Calu3 (cell line): ENCODE measurements at regions of chr20 and their contacts with region 1.

Region 1: DNA sequence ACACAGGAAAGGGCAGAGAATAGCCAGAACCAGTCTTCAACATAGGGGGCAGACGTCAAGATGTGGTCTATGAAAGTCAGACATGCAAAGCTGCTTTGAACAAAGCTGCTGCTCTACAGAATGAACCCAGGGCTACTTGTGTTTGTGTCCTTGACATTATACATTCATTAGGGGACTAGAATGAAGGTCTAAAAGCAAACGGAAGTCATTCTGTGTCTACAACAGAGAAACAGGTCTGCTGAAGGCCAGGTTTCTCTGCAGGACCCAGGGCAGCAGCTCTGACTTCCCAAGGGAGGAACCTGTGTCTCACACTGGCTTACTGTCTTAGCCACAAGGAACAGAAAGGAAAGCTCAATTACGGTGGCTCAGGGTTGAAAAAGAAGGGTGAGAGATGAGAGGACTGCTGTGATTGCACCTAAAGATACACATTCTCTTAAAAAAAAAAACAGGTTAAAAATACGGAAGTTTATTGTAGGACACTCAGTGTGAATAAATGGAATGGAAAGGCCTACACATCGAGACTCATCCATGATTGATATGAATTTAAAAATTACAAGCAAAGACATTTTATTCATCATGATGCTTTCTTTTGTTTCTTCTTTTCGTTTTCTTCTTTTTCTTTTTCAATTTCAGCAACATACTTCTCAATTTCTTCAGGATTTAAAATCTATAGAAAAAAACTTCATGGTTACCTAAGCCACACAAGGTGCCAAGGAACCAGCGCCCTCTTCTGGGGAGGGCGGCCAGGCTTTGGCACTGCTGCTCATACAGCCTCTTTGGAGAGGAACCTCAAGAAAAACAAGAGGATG is 6.7 kb downstream of the PSMA7 start:
- DNase-seq: peak; percentile 83
- H3K4me3 Mint-ChIP-seq: no peak overlapping the region
- H3K27ac Mint-ChIP-seq: peak overlapping the region; percentile 37
- H3K4me1 Mint-ChIP-seq: peaks cover 27% of the 10 kb centered on the region
- H3K27me3 Mint-ChIP-seq: no peaks in the 10 kb centered on the region
- CTCF ChIP-seq: peak; percentile 82

Region 2: DNA sequence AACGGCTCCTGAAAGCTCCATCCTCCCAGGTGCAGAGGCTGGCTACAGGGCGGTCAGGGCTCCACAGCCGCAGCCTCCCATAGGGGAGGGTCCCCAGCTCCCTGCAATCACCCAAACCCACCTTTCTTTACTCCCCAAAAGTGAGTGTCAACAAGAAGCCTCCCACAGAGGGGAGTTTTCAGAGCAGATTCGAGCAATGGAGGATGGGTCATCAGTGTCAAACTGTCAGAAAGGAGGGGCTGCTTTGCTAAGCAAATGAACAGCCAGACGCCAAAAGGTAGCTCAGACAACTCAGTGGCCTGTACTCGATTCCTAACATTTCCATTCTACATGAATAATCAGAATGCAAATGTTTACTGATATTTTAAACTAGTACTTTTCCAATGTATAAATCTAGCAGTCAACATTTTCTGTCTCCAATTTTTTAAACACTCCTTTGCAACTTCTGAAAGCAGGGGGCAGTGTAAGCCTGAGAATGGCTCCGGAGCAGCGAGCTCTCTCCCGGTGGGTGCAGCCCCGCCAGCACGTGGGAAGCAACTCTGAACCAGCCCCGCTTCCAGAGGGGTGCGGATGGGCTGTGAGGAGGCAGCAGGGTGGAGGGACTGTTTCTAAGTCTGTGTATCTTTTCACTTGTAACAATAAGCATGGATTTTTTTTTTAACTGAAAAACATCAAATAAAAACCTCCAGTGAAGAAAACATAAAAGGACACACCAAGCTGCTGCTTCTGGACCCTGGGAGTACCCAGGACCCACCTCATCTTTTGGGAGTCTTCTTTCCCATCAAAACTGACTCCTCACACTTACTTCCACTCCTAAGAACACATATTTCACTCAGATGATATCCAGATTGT is 125.7 kb before region 1 on chr20:
- CTCF ChIA-PET with region 1: interaction called, 6 read pairs
- intact Hi-C with region 1: loop called (anchors 2 kb)
- DNase-seq: peak; percentile 76
- H3K4me3 Mint-ChIP-seq: no peak overlapping the region
- H3K27ac Mint-ChIP-seq: no peak overlapping the region
- H3K4me1 Mint-ChIP-seq: peaks cover 19% of the 10 kb centered on the region
- H3K27me3 Mint-ChIP-seq: no peaks in the 10 kb centered on the region
- CTCF ChIP-seq: peak; percentile 76

Region 3: DNA sequence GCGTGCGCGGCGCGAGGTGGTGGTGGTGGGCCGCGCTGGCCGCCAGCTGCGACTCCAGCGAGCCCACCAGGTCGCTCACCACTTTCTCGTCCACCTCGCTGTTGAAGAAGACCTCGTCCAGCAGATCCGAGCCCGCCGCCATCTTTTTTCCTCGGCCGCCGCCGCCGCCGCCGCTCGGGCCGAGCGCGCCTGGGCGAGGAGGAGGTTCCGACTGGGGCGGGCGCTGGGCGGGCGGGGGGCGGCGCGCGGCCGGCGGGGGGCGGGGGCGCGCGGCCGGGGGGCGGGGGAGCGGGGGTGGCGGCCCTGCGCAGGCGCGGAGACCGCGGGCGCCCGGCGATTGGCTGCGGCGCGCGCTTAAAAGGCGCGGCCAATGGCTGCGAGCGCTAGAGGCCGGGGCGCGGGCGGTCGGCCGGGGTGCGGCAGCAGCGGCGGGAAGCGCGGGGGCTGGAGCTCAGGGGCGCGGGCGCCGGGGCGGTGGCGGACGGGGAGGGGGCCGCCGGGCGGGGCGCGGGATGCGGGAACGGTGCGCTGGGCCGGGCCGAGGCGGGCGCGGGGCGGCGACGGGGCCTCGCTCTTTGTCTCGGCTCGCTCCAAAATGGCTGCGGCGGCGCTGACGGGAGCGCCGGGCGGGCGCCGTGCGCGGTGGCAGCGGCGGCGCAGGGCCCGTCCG is 70.7 kb before region 1 on chr20 and contains the start of gene TAF4:
- CTCF ChIA-PET with region 1: no interaction called
- intact Hi-C with region 1: loop called (anchors 5 kb)
- DNase-seq: peak; percentile 82
- H3K4me3 Mint-ChIP-seq: peak within 1 kb of the TSS; percentile 77
- H3K27ac Mint-ChIP-seq: peak within 1 kb of the TSS; percentile 99
- H3K4me1 Mint-ChIP-seq: peaks cover 54% of the 10 kb centered on the region
- H3K27me3 Mint-ChIP-seq: peaks cover 12% of the 10 kb centered on the region
- CTCF ChIP-seq: no peak
- total RNA-seq, gene TAF4: 64.3 and 65.2 TPM in 2 replicates

Region 4: DNA sequence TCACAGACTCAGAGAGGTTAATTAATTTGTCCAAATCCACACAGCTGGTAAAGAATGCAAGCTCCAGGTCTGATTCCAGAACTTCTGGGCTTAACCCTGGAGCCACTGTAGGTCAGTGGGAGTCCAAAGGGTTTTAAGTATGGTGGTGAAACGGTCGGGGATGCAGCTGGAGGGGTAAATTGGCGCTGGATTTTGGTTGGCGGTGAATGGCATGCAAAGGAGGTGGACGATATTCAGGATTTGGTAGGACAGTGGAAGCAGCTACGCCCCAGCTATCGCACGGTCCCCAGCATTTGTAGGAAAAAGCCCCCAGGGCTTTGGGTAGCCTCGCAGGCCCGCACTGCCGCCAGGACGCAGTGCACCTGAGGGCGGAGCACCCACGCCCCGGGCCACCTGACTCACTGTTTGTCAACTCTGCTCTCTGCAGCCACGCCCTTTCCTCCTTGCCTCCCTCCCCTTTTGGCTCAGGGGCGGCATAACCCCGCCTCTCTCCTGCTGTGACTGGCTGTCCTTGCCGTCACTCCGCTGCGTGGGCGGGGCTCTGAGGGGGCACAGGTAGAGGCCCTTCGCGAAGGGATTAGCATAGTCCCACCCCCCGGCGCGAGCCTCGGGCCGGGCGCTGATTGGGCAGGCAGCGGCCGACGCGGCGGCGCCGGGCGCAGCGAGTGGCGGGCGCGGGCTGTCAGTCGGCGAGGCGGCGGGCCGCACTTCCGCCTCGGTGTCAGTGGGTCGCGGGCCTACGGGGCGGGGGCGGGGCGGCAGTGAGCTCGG is 101.5 kb after region 1 on chr20 and contains the start of gene OSBPL2:
- CTCF ChIA-PET with region 1: no interaction called
- intact Hi-C with region 1: no loop called
- DNase-seq: peak; percentile 100
- H3K4me3 Mint-ChIP-seq: peak within 1 kb of the TSS; percentile 88
- H3K27ac Mint-ChIP-seq: peak within 1 kb of the TSS; percentile 94
- H3K4me1 Mint-ChIP-seq: peaks cover 55% of the 10 kb centered on the region
- H3K27me3 Mint-ChIP-seq: peaks cover 13% of the 10 kb centered on the region
- CTCF ChIP-seq: no peak
- total RNA-seq, gene OSBPL2: 115 and 129 TPM in 2 replicates